ENCODE measurements at regions of chr19 and their contacts with region 1.

Region 1: GRCh38 chr19:48386981-48387380 is 4.4 kb downstream of the KDELR1 start:
- DNase-seq: no peak
- H3K4me3 ChIP-seq: no peak overlapping the region
- H3K27ac ChIP-seq: no peak overlapping the region
- H3K4me1 ChIP-seq: peaks cover 0 to 15% (median 9%) of the 10 kb centered on the region in 4 donors
- H3K27me3 ChIP-seq: no peaks in the 10 kb centered on the region
- CTCF ChIP-seq: no peak

Region 2: GRCh38 chr19:48230555-48231129 is 156.3 kb before region 1 on chr19:
- intact Hi-C with region 1: no loop called
- DNase-seq: no peak
- H3K4me3 ChIP-seq: no peak overlapping the region
- H3K27ac ChIP-seq: no peak overlapping the region
- H3K4me1 ChIP-seq: no peaks in the 10 kb centered on the region
- H3K27me3 ChIP-seq: no peaks in the 10 kb centered on the region
- CTCF ChIP-seq: no peak

Region 3: DNA sequence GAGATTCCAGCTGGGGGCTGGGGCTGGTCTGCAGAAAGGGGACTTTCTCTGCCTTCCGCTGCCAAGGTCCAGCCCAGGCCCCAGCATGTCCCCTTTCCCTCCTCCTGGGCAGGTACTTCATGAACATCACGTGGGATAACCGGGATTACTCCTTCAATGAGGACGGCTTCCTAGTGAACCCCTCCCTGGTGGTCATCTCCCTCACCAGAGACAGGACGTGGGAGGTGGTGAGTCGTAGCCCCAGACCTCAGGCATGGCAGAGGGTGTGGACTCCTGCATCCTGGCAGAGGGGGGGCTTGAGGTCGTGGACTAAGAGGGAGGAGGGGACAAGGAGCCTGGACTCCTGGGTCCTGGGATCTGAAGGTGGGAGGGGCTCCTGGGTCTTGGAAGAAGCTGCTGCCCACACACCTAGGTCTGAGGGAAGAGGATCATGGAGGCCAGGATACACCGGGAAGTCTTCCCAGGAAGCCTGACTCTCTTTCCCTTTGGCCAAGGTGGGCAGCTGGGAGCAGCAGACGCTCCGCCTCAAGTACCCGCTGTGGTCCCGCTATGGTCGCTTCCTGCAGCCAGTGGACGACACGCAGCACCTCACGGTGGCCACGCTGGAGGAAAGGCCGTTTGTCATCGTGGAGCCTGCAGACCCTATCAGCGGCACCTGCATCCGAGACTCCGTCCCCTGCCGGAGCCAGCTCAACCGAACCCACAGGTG is 27.1 kb after region 1 on chr19:
- intact Hi-C with region 1: loop called (anchors 1 kb)
- DNase-seq: no peak
- H3K4me3 ChIP-seq: no peak overlapping the region
- H3K27ac ChIP-seq: no peak overlapping the region
- H3K4me1 ChIP-seq: peaks cover 0 to 16% (median 6%) of the 10 kb centered on the region in 4 donors
- H3K27me3 ChIP-seq: peaks cover 0 to 56% of the 10 kb centered on the region in 2 donors
- CTCF ChIP-seq: no peak

Measured in tibial artery (tissue), 4 donors.